ENCODE measurements at regions of chr1 and their contacts with region 1.

Region 1: DNA sequence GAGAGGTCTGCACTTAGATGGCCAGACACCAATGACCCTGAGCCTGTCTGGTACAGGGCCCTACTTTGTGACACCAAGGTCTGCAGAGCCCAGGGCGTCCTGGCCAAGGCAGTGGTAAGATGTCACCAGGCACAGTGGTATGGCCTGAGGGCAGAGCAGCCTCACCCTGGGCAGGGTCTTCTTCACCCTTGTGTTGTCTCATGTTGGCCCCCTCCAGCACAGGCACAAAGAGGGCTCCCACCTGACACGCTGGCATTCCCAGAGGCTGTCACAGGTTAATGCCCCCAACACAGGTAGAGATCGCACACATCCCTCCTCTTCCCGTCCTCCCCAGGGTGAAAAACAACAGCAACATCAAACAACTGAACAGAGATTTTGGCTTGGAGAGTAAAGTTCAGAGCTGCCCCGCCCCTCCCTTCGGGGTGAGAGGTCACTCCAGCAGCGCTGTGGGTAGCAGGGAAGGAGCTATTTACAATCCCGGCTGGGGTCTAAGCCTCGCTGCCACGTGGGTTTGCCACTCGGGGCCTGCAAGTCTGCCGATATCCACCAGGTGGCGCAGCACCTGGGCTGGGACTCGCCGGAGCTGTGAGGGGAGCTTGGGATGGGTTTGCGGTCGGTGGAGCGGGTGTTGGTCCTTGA is 12.6 kb downstream of the EFNA3 start:
- DNase-seq: peak; percentile 93
- ATAC-seq: peak; percentile 72
- H3K4me3 ChIP-seq: peak overlapping the region; percentile 45
- H3K27ac ChIP-seq: no peak overlapping the region
- H3K4me1 ChIP-seq: peaks cover 15% of the 10 kb centered on the region
- H3K27me3 ChIP-seq: no peaks in the 10 kb centered on the region
- CTCF ChIP-seq: peak; percentile 99

Region 2: DNA sequence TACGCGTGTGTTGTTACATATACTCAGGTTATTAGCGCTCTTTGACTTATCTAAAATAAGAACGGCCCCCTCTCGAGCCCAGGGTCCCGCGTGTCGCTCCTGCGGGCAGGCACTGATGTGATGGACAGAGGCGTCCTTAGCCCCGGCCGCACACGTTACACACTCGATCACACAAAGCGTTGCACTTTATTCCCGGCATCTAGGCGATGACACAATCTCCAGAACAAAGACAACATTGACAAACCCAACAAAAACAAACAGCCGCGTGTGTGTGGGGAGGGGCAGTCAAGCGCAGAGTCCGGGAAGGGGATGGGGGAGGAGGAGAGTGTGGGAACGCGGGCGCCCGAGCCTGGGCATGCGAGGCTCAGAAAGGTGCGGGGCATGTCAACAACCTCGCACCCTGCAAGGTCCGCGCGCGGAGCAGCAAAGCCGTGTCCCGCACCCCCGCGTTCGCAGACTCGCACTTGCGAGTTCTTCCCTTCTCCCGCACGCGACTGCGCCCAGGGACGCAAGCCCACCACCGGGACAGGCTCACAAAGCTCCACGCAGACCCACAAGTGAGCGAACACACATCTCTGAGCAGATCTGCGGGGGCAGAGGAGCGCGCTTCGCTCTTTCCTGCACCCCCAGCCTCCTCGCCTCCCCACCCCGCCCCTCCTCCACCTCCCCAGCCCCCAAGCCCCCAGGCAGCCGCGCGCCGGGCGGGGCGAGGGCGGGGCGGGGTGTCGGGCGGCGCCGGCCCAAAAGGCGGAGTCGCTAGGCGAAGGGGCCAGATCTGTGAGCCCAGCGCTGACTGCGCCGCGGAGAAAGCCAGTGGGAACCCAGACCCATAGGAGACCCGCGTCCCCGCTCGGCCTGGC is 36.1 kb after region 1 on chr1 and contains the start of gene EFNA1:
- CTCF ChIA-PET with region 1: interaction called, 14 read pairs
- POLR2A ChIA-PET with region 1: no interaction called
- intact Hi-C with region 1: loop called (anchors 1 kb)
- DNase-seq: peak; percentile 86
- ATAC-seq: peak; percentile 45
- H3K4me3 ChIP-seq: peak within 1 kb of the TSS; percentile 85
- H3K27ac ChIP-seq: peak within 1 kb of the TSS; percentile 99
- H3K4me1 ChIP-seq: peaks cover 68% of the 10 kb centered on the region
- H3K27me3 ChIP-seq: no peaks in the 10 kb centered on the region
- CTCF ChIP-seq: no peak
- total RNA-seq, gene EFNA1: 29.4 and 49.9 TPM in 2 replicates

Region 3: DNA sequence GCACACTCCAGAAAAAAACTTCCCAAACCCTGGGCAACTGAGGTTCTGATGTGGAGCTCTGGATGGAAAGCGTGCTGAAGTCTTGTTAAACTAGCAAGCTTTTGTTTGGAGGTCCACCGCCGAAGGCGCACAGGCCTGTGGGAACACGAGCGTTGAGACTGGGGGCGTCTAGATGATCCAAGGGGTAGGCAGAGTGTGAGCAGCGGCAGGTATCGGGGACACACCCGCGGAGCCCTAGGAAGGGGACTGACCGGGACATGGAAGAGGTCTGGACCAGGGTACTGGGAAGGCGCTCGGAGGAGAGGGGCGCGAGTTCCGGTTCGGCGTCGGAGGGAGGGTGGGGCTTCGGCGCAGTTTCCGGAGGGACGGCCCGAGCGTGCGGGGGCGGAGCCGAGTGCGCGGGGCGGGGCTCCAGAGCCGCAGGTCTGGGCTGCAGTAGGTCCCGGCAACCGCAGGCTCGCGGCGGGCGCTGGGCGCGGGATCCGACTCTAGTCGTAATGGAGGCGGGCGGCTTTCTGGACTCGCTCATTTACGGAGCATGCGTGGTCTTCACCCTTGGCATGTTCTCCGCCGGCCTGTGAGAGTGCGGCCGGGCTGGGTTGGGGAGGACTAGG is 44.3 kb after region 1 on chr1 and contains the start of gene SLC50A1:
- CTCF ChIA-PET with region 1: interaction called, 14 read pairs
- POLR2A ChIA-PET with region 1: interaction called, 4 read pairs
- intact Hi-C with region 1: loop called (anchors 1 kb)
- DNase-seq: peak; percentile 97
- ATAC-seq: peak; percentile 73
- H3K4me3 ChIP-seq: peak within 1 kb of the TSS; percentile 87
- H3K27ac ChIP-seq: peak within 1 kb of the TSS; percentile 94
- H3K4me1 ChIP-seq: peaks cover 54% of the 10 kb centered on the region
- H3K27me3 ChIP-seq: no peaks in the 10 kb centered on the region
- CTCF ChIP-seq: no peak
- total RNA-seq, gene SLC50A1: 59.2 and 75.2 TPM in 2 replicates

Region 4: GRCh38 chr1:155167166-155168104 is 76.2 kb after region 1 on chr1:
- CTCF ChIA-PET with region 1: interaction called, 57 read pairs
- POLR2A ChIA-PET with region 1: interaction called, 6 read pairs
- intact Hi-C with region 1: loop called (anchors 1 kb)
- DNase-seq: peak; percentile 94
- ATAC-seq: peak; percentile 86
- H3K4me3 ChIP-seq: peak overlapping the region; percentile 67
- H3K27ac ChIP-seq: peak overlapping the region; percentile 19
- H3K4me1 ChIP-seq: peaks cover 12% of the 10 kb centered on the region; the same call in 1 of the 2 replicates
- H3K27me3 ChIP-seq: no peaks in the 10 kb centered on the region
- CTCF ChIP-seq: peak; percentile 99